Dendritic cell treated with granulocyte-macrophage colony-stimulating factor and Interleukin-4, amounts not matched to agents 40 ng/mL and 50 ng/mL, for 4 days (primary cell): ENCODE measurements at regions of chr18 and their contacts with region 1.

Region 1: GRCh38 chr18:31857526-31858106 is 85.3 kb downstream of the TRAPPC8 start:
- H3K4me3 Mint-ChIP-seq: no peak overlapping the region
- H3K27ac Mint-ChIP-seq: no peak overlapping the region
- H3K4me1 Mint-ChIP-seq: no peaks in the 10 kb centered on the region
- H3K27me3 Mint-ChIP-seq: no peaks in the 10 kb centered on the region

Region 2: GRCh38 chr18:31596081-31596872 is 261.3 kb before region 1 on chr18:
- intact Hi-C with region 1: no loop called
- H3K4me3 Mint-ChIP-seq: no peak overlapping the region
- H3K27ac Mint-ChIP-seq: no peak overlapping the region
- H3K4me1 Mint-ChIP-seq: no peaks in the 10 kb centered on the region
- H3K27me3 Mint-ChIP-seq: no peaks in the 10 kb centered on the region

Region 3: DNA sequence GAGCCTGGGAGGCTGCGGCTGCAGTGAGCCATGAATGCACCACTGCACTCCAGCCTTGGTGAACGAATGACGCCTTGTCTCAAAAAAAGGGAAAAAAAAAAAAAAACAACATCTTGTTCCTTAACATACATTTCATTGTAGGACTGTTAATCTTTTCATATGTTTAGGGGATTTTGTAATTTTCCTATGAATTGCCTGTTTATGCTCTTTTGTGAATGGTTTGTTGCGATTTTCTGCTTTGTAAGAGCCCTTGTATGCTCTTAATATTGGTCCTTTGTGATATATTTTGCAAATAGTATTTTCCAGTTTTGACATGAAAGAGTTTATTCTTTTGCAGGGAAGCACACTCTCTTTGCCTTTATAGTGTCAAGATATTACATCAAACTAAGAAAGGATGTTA is 35.3 kb after region 1 on chr18:
- intact Hi-C with region 1: loop called (anchors 5 kb)
- H3K4me3 Mint-ChIP-seq: no peak overlapping the region
- H3K27ac Mint-ChIP-seq: no peak overlapping the region
- H3K4me1 Mint-ChIP-seq: no peaks in the 10 kb centered on the region
- H3K27me3 Mint-ChIP-seq: no peaks in the 10 kb centered on the region

Region 4: DNA sequence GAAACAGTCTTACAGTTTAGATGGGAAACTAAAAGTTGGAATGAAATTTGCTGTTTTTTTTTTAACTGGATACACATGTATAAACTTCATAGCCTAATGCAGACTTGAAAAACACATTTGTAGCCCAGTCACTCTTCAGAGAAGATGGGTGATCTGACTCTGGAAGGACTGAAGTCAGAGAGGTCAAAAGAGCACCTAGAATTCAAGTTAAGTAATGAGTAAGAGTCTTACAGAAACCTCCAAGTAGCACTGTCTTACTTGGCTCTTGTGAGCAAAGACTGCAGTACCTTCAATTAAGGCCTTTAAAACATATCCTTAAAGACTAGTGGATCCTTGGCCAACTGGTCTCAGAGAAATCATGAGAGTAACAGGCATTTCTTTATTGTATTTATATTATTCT is 43.4 kb after region 1 on chr18:
- intact Hi-C with region 1: loop called (anchors 5 kb)
- H3K4me3 Mint-ChIP-seq: no peak overlapping the region
- H3K27ac Mint-ChIP-seq: no peak overlapping the region
- H3K4me1 Mint-ChIP-seq: no peaks in the 10 kb centered on the region
- H3K27me3 Mint-ChIP-seq: no peaks in the 10 kb centered on the region

Region 5: DNA sequence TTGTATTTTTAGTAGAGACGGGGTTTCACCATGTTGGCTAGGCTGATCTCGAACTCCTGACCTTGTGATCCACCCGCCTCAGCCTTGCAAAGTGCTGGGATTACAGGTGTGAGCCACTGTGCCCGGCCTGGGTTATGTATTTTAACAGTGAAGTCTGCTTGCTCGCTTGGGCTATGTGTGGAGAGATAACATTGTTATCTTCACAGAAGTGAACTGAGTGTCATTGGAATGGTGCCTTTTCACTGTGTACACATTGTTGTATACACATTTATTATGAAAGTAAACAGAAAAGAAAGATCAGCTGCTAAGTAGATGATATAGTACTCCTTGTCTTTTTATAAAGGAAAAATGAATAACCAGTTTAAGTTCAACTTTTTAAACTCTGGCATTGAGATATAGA is 264.4 kb after region 1 on chr18:
- intact Hi-C with region 1: loop called (anchors 10 kb)
- H3K4me3 Mint-ChIP-seq: no peak overlapping the region
- H3K27ac Mint-ChIP-seq: no peak overlapping the region
- H3K4me1 Mint-ChIP-seq: no peaks in the 10 kb centered on the region
- H3K27me3 Mint-ChIP-seq: no peaks in the 10 kb centered on the region